ENCODE measurements at regions of chr1 and their contacts with region 1.

Region 1: GRCh38 chr1:221886743-221887413 is 145.0 kb upstream of the DUSP10 start:
- DNase-seq: peak; percentile 97 to 99
- H3K4me3 ChIP-seq: no peak overlapping the region; the same call in 1 of the 2 replicates
- H3K27ac ChIP-seq: peak overlapping the region; percentile 84
- H3K4me1 ChIP-seq: peaks cover 47% of the 10 kb centered on the region
- H3K27me3 ChIP-seq: no peaks in the 10 kb centered on the region
- CTCF ChIP-seq: no peak

Region 2: GRCh38 chr1:221478050-221478949 is 408.6 kb before region 1 on chr1:
- CTCF ChIA-PET with region 1: no interaction called
- POLR2A ChIA-PET with region 1: no interaction called
- intact Hi-C with region 1: loop called (anchors 2 kb)
- DNase-seq: peak; percentile 74 to 80
- H3K4me3 ChIP-seq: no peak overlapping the region
- H3K27ac ChIP-seq: no peak overlapping the region
- H3K4me1 ChIP-seq: peaks cover 13% of the 10 kb centered on the region
- H3K27me3 ChIP-seq: no peaks in the 10 kb centered on the region
- CTCF ChIP-seq: peak; percentile 79

Region 3: DNA sequence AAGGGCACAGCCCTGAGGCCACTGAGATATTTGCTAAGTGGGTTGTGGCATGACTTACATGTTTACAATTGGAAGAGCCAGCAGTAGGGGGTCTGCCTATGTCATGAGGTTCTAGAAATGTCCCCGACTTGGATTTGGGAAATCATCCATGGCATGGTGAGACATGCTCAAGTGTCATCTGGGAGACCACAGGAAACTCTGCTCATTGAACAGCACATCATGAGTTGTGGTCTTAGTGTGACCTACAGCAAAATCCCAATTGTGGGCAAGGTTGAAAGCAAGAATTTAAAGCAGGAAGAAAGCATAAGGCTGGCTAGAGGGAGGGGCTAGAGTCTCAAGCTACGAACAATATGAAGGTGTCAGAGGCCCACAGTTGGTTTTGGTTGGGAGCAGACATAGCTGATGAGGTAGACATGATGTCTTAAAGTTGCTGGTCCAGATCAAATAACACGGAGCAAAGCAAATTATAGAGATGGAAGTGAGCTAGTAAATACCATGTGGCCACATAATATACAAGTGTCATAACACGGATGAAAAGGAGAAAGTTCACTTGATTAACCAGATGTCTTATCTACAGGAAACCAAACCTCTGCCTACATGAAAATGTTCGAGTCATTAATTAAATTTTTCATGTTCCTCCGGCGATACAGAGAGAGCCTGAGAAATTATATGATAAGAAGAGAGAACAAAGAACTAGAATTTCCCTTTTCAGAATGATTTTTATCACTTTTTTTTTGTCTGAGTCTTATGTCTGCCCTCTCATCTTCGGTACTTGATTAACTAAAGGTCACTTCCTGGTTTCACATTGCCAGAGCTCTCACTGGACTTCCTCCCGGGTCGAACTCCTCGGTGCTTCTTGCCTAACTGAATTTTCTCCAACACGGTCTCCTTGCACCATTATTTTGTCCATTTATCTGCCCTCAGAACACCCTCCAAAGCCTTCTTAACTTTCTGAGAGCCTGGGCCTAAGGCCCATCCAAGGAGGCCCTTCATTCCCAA is 77.5 kb before region 1 on chr1:
- CTCF ChIA-PET with region 1: no interaction called
- POLR2A ChIA-PET with region 1: interaction called, 13 read pairs
- intact Hi-C with region 1: loop called (anchors 1 kb)
- DNase-seq: no peak
- H3K4me3 ChIP-seq: no peak overlapping the region
- H3K27ac ChIP-seq: peak overlapping the region; percentile 90
- H3K4me1 ChIP-seq: peaks cover 59% of the 10 kb centered on the region
- H3K27me3 ChIP-seq: no peaks in the 10 kb centered on the region
- CTCF ChIP-seq: no peak

Region 4: GRCh38 chr1:221979461-221980032 is 92.7 kb after region 1 on chr1:
- CTCF ChIA-PET with region 1: interaction called, 14 read pairs
- POLR2A ChIA-PET with region 1: no interaction called
- intact Hi-C with region 1: no loop called
- DNase-seq: no peak
- H3K4me3 ChIP-seq: no peak overlapping the region
- H3K27ac ChIP-seq: 0 out of 2 replicates have a peak overlapping the region, but pooled peaks have one; percentile 8
- H3K4me1 ChIP-seq: no peaks in the 10 kb centered on the region
- H3K27me3 ChIP-seq: no peaks in the 10 kb centered on the region
- CTCF ChIP-seq: peak; percentile 62

Region 5: DNA sequence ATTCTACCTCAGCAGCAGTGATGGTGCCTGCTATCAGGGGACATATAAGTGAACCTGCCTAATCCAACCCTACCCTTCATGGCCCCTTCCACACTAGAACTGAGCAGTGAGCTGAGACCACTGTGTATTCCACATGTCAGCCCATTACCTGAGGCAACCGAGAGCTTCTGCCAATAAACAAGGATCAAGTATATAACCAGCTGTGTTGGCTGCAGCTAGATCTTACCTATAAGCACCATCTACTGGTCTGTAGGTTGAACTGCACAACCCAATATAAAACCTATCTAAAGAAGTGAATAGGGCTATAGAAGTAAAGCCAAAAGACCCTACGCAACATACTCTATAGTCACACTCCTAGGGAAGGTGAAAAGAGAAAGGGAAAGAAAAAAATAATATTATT is 284.1 kb after region 1 on chr1:
- CTCF ChIA-PET with region 1: no interaction called
- POLR2A ChIA-PET with region 1: no interaction called
- intact Hi-C with region 1: loop called (anchors 2 kb)
- DNase-seq: peak; percentile 3 to 38
- H3K4me3 ChIP-seq: no peak overlapping the region
- H3K27ac ChIP-seq: no peak overlapping the region
- H3K4me1 ChIP-seq: no peaks in the 10 kb centered on the region
- H3K27me3 ChIP-seq: no peaks in the 10 kb centered on the region
- CTCF ChIP-seq: peak; percentile 85

Measured in PC-9 (cell line).